Naive thymus-derived CD8-positive, alpha-beta T cell (primary cell): ENCODE measurements at regions of chr9 and their contacts with region 1.

Region 1: DNA sequence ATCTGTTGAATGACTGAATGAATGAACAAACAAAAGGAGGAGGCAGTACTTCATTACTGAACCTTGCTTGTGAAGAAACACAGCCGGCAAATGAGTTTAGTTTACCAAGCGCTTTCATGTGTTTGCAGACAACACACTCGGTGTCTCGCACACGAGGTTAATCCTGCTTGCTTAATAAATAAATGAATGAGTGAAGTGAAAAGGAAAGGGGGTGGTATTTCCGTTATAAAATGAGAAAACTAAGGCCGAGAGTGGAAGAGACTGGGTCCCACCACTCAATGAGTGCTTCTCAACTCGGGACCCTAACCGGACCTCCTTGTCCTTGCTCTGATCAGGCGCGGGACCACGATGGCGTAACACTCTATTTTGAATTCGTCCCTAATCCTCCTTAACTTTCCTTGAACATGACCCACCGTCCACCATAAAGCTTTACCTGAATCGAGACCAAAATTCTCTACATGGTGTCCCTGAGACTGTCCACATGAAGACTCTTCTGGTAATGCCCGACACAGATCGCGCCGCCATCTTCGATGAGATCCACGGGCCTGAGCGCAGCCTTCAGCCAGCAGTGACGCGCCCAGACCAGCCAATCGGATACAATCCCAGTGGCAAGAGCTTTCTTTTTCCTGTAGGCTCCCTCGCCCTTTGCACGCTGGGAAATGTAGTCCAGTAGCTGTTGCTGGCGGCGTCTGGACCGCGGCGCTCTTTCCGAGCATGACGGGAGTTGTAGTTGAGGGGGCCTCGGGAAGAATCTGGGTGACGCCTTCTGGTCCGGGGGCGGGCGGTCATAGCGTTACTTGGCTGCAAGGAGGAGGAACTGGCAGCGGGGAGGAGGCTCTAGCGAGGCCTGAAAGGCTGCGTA is at the starts of genes MRPL50 and ZNF189:
- DNase-seq: peak; percentile 85 to 98 (median 97)
- ATAC-seq: peak; percentile 93
- H3K4me3 Mint-ChIP-seq: peak within 1 kb of the TSS; percentile 98 to 100 (median 99)
- H3K27ac Mint-ChIP-seq: peak within 1 kb of the TSS; percentile 99 to 100 (median 100)
- H3K4me1 Mint-ChIP-seq: peaks cover 38 to 93% (median 84%) of the 10 kb centered on the region in 4 donors
- H3K27me3 Mint-ChIP-seq: no peaks in the 10 kb centered on the region
- polyA plus RNA-seq, gene MRPL50: 12.9 to 17.8 (median 13.2) TPM
- polyA plus RNA-seq, gene ZNF189: 1.4 to 2.6 (median 2.6) TPM

Region 2: GRCh38 chr9:101409079-101409477 is 10.8 kb after region 1 on chr9:
- POLR2A ChIA-PET with region 1: interaction called, 10 read pairs
- DNase-seq: no peak
- ATAC-seq: no peak
- H3K4me3 Mint-ChIP-seq: no peak overlapping the region
- H3K27ac Mint-ChIP-seq: no peak overlapping the region
- H3K4me1 Mint-ChIP-seq: peaks cover 0 to 5% (median 0%) of the 10 kb centered on the region in 4 donors
- H3K27me3 Mint-ChIP-seq: no peaks in the 10 kb centered on the region

Region 3: DNA sequence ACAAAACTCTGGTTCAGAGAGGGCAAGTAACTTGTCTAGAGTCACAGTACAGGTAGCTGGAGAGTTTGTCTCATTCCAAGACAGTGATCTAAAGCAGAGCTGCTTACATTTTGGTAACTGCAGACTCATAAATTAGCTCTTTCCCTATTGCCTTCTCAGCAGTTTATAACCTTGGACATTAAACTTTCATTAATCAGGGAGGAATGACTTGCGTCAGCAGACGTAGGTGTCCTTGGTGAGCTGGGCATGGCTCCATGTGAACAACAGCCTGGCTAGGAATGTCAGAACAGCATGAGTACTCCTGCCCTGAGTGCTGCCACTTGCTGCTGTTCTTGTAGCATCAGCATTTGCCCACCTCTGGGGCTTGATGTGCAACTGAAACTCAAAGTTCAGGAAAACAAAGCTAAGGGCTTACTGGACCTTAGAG is 39.5 kb after region 1 on chr9:
- POLR2A ChIA-PET with region 1: no interaction called
- DNase-seq: no peak
- ATAC-seq: no peak
- H3K4me3 Mint-ChIP-seq: no peak overlapping the region
- H3K27ac Mint-ChIP-seq: no peak overlapping the region
- H3K4me1 Mint-ChIP-seq: no peaks in the 10 kb centered on the region
- H3K27me3 Mint-ChIP-seq: peaks cover 18 to 68% (median 31%) of the 10 kb centered on the region in 5 donors

Region 4: GRCh38 chr9:101533334-101534107 is 135.2 kb after region 1 on chr9 and contains the start of gene RNF20:
- POLR2A ChIA-PET with region 1: interaction called, 18 read pairs
- DNase-seq: peak; percentile 97 to 100 (median 99)
- ATAC-seq: peak; percentile 90 to 92
- H3K4me3 Mint-ChIP-seq: peak within 1 kb of the TSS; percentile 90 to 97 (median 94)
- H3K27ac Mint-ChIP-seq: peak within 1 kb of the TSS; percentile 94 to 100 (median 99)
- H3K4me1 Mint-ChIP-seq: peaks cover 11 to 32% (median 24%) of the 10 kb centered on the region in 4 donors
- H3K27me3 Mint-ChIP-seq: peaks cover 0 to 14% (median 5%) of the 10 kb centered on the region in 5 donors
- polyA plus RNA-seq, gene RNF20: 30.6 to 48.2 (median 43.6) TPM